A673 (cell line): ENCODE measurements at regions of chr21 and their contacts with region 1.

Region 1: DNA sequence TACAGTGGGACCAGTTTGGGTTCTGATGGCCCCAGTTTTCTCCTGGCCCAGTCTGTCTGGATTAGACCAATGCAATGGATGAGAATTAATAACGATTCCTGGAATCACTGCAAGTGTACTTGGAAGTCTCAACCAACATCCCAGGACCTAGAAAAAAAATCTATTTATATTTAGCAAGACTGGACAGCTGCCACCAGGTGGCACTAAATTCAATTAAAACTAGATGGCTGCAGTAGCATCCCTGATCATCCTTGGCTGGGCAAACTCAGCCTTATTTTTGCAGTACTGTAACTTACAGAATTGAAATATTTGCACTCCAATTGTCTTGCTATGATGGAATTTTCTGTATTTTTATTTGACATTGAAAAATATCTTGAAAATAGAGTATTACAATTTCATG is 165.7 kb downstream of the NCAM2 start:
- DNase-seq: peak; percentile 81
- H3K4me3 ChIP-seq: no peak overlapping the region
- H3K27ac ChIP-seq: no peak overlapping the region
- H3K4me1 ChIP-seq: peaks cover 11% of the 10 kb centered on the region
- H3K27me3 ChIP-seq: no peaks in the 10 kb centered on the region
- CTCF ChIP-seq: peak; percentile 72

Region 2: DNA sequence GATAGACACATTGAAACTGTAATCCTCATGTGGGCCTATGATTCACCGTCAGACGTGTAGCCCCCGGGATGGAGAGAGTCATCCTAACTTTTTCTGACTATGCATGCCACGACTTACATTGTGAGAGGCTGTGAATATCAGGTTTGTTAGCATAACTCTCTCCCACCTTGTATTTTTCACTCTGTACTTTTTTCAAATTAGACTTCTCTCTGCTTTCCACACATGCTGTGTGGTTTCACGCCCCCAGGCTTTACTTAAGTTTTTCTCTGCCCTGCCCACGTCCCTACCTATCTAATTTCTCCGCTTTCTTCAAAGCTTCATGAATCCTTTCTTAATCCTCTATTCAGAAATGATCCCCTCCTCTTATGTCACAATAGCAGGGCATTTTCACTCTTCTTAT is 169.1 kb before region 1 on chr21:
- CTCF ChIA-PET with region 1: no interaction called
- POLR2A ChIA-PET with region 1: no interaction called
- intact Hi-C with region 1: no loop called
- DNase-seq: no peak
- H3K4me3 ChIP-seq: no peak overlapping the region
- H3K27ac ChIP-seq: no peak overlapping the region
- H3K4me1 ChIP-seq: no peaks in the 10 kb centered on the region
- H3K27me3 ChIP-seq: no peaks in the 10 kb centered on the region
- CTCF ChIP-seq: no peak

Region 3: DNA sequence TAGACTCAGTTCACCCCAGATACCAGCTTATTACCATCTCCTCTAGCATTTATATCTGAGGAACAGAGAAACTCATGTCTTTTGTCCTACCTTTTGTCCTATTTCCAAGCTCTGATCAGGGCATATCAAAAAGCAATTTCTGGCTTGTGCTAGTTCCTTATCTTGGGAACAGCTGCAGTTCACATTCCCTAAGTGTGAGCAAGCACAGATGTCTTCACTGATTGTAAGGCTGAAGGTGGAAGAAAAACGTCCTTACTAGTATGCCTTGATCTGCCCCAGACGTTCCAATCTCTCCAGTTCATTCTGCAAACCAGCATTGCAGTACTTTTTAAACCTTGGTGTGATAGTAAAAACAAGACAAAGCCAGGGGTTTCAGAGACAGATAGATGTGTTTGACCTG is 25.9 kb before region 1 on chr21:
- CTCF ChIA-PET with region 1: no interaction called
- POLR2A ChIA-PET with region 1: interaction called, 13 read pairs
- intact Hi-C with region 1: no loop called
- DNase-seq: no peak
- H3K4me3 ChIP-seq: no peak overlapping the region
- H3K27ac ChIP-seq: no peak overlapping the region
- H3K4me1 ChIP-seq: no peaks in the 10 kb centered on the region
- H3K27me3 ChIP-seq: no peaks in the 10 kb centered on the region
- CTCF ChIP-seq: no peak

Region 4: GRCh38 chr21:21688875-21689274 is 525.0 kb after region 1 on chr21:
- CTCF ChIA-PET with region 1: no interaction called
- POLR2A ChIA-PET with region 1: no interaction called
- intact Hi-C with region 1: loop called (anchors 5 kb)
- DNase-seq: peak; percentile 72
- H3K4me3 ChIP-seq: no peak overlapping the region
- H3K27ac ChIP-seq: no peak overlapping the region
- H3K4me1 ChIP-seq: peaks cover 13% of the 10 kb centered on the region
- H3K27me3 ChIP-seq: no peaks in the 10 kb centered on the region
- CTCF ChIP-seq: peak; percentile 82